PC-9 (cell line): ENCODE measurements at regions of chr20 and their contacts with region 1.

Region 1: DNA sequence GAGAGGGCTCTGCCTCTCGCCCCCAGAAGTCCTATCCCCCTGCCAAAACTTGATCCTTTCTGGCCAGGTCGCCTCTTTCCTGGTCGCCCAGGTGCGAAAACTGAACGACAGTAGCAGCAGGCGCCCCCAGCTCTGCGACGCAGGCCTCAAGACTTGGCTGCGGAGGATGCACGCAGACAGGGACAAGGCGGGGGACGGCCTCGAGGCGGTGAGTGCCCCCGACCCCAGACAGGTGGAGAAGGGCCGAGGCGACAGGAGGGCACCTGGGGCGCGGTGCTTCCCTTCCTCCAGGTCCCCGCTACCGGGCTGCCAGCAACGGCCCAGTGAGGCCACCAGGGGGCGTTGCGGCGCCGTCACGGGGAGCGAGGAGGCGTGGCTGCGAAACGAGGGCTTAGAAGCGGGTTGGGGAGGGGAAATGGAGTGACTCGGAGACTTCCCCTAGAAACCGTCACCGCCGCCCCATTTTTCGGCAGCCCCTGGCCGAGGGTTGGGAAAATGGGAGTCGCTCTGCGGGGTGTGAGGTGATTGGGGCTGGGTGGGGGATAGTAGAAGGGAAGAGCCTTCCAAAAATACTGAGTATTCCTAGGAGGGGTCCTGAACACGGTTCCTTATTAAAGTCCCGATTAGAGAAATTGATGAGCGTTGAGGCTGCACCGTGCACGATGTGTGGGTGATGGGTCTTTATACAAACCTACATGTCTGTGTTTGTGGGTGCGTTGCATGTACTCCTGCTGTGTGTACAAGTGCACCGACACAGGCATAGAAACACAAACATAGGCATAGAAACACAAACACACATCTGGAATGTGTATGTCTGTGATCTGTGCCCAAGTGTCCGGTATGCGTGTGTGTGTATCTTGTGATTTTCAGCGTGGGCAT is 44.6 kb downstream of the ARHGAP40 start:
- DNase-seq: peak in 1 of 2 experiments; percentile 83
- H3K4me3 ChIP-seq: peak overlapping the region; percentile 50; the same call in 1 of the 2 replicates
- H3K27ac ChIP-seq: no peak overlapping the region
- H3K4me1 ChIP-seq: 0 out of 2 replicates have a peak, but pooled peaks cover 5% of the 10 kb centered on the region
- H3K27me3 ChIP-seq: no peaks in the 10 kb centered on the region
- CTCF ChIP-seq: peak; percentile 97

Region 2: DNA sequence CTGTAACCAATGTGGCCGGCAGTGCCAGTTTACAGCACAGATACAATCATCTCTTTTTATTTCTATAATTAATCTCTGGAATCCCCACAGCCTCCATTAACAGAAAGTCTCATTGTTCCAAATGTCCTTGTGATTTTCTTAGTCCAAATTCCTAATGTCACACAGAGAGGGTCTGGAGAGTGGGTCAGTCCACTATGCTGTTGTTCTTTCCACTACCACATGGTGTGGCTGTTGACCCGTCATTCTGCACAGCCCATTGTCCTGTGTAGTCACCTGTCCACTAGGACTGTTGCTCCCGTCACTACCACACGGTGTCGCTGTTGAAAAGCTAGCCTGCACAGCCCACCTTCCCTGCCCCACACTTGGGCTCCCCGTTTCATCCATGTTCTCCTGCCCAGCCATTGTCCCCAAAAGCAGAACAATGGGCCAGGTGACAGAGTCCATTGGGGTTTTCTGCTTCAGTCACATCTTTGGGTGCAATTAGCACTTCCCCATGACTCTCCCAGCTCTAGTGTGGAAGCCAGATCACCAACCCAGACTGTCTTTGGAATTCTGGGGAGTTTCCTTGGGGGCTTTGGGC is 308.6 kb before region 1 on chr20:
- CTCF ChIA-PET with region 1: no interaction called
- POLR2A ChIA-PET with region 1: no interaction called
- intact Hi-C with region 1: loop called (anchors 5 kb)
- DNase-seq: peak; percentile 60 to 61
- H3K4me3 ChIP-seq: no peak overlapping the region
- H3K27ac ChIP-seq: no peak overlapping the region
- H3K4me1 ChIP-seq: no peaks in the 10 kb centered on the region
- H3K27me3 ChIP-seq: peaks cover 48% of the 10 kb centered on the region; the same call in 1 of the 2 replicates
- CTCF ChIP-seq: peak; percentile 94

Region 3: GRCh38 chr20:38559764-38560163 is 86.5 kb before region 1 on chr20:
- CTCF ChIA-PET with region 1: no interaction called
- POLR2A ChIA-PET with region 1: no interaction called
- intact Hi-C with region 1: no loop called
- DNase-seq: no peak
- H3K4me3 ChIP-seq: no peak overlapping the region
- H3K27ac ChIP-seq: no peak overlapping the region
- H3K4me1 ChIP-seq: no peaks in the 10 kb centered on the region
- H3K27me3 ChIP-seq: no peaks in the 10 kb centered on the region
- CTCF ChIP-seq: no peak

Region 4: DNA sequence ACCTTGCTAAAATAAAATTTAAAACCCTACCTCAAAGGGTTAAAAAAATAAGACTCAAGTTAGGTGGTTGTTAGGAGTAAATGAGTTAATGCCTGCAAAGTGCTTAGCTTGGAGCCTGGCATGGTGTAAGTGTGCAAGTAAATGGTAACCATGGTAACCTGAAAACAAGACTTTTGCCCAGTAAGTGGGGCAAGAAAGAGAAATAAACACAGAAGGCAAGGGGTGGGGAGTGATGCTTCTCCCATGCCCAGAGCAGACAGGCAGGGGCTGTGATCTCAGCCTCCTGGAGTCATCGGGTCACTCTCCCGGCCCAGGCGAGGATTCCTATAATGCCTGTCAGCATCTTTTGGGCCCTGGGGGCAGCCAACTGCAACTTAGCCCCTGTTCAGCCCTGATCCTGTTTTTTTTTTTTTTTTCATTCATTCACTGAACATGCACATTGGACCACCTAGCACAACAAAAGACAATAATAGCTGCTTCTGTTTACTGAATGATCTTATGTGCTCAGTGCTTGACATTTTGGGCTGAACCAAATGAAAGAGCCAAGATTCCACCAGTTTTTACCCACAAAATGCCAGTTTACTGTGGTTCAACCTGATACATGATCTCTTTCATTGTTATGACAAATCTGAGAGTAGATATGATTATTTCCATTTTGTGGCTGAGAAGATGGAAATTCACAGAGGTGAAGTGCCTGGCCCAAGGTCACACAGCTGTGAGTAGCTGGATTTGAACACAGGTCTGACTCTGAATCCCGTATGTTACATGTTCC is 19.1 kb after region 1 on chr20:
- CTCF ChIA-PET with region 1: no interaction called
- POLR2A ChIA-PET with region 1: no interaction called
- intact Hi-C with region 1: no loop called
- DNase-seq: no peak
- H3K4me3 ChIP-seq: no peak overlapping the region
- H3K27ac ChIP-seq: no peak overlapping the region
- H3K4me1 ChIP-seq: no peaks in the 10 kb centered on the region
- H3K27me3 ChIP-seq: peaks cover 89% of the 10 kb centered on the region
- CTCF ChIP-seq: no peak

Region 5: DNA sequence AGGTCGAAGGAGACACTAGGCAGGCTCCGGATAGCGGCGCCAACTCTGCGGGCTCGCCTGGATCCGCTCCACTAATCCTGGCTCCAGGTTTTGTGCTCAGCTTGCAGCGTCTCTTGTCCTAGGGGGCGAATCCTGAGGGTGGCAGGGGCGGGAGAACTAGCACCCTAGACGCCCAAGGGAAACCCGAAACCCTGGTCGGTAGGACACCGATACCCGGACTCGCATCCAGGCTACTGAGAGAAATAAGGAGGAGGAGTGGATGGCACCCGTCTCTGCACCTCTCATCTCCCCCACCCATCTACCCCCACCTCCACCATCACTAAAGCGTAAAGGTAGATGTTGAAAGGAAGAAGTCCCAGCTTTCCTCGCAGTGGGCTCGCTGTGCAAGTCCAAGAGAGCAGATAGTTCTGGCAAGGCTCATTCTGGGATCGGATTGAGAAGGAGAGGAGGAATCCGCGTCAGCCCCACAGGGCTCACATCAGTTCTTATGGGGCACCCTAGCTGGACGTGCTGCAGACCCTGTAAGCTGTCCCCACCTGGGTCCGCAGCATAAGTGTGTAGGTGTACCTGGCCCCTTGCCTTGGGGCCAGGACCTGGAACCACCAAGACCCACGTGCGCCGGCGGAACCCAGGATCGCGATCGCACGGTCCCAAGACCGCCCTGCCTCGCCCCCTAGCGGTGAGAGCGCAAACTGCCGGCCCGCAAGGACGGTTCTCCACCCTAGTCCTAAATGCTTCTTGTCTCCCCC is 84.9 kb after region 1 on chr20:
- CTCF ChIA-PET with region 1: interaction called, 4 read pairs
- POLR2A ChIA-PET with region 1: no interaction called
- intact Hi-C with region 1: loop called (anchors 5 kb)
- DNase-seq: peak in 1 of 2 experiments; percentile 38
- H3K4me3 ChIP-seq: no peak overlapping the region
- H3K27ac ChIP-seq: no peak overlapping the region
- H3K4me1 ChIP-seq: no peaks in the 10 kb centered on the region
- H3K27me3 ChIP-seq: peaks cover 82% of the 10 kb centered on the region
- CTCF ChIP-seq: peak; percentile 96

Region 6: GRCh38 chr20:38748097-38748860 is 102.1 kb after region 1 on chr20 and contains the start of gene ACTR5:
- CTCF ChIA-PET with region 1: no interaction called
- POLR2A ChIA-PET with region 1: interaction called, 7 read pairs
- intact Hi-C with region 1: loop called (anchors 1 kb)
- DNase-seq: peak; percentile 73 to 97
- H3K4me3 ChIP-seq: peak within 1 kb of the TSS; percentile 79
- H3K27ac ChIP-seq: peak within 1 kb of the TSS; percentile 40
- H3K4me1 ChIP-seq: peaks cover 13% of the 10 kb centered on the region; the same call in 1 of the 2 replicates
- H3K27me3 ChIP-seq: peaks cover 26% of the 10 kb centered on the region
- CTCF ChIP-seq: no peak
- total RNA-seq, gene ACTR5: 7.8 and 10.1 TPM in 2 replicates

Region 7: GRCh38 chr20:38790200-38791053 is 144.2 kb after region 1 on chr20:
- CTCF ChIA-PET with region 1: no interaction called
- POLR2A ChIA-PET with region 1: interaction called, 3 read pairs
- intact Hi-C with region 1: loop called (anchors 2 kb)
- DNase-seq: peak; percentile 42 to 61
- H3K4me3 ChIP-seq: peak overlapping the region; percentile 24; the same call in 1 of the 2 replicates
- H3K27ac ChIP-seq: peak overlapping the region; percentile 67
- H3K4me1 ChIP-seq: peaks cover 17% of the 10 kb centered on the region
- H3K27me3 ChIP-seq: no peaks in the 10 kb centered on the region
- CTCF ChIP-seq: peak; percentile 85

Region 8: DNA sequence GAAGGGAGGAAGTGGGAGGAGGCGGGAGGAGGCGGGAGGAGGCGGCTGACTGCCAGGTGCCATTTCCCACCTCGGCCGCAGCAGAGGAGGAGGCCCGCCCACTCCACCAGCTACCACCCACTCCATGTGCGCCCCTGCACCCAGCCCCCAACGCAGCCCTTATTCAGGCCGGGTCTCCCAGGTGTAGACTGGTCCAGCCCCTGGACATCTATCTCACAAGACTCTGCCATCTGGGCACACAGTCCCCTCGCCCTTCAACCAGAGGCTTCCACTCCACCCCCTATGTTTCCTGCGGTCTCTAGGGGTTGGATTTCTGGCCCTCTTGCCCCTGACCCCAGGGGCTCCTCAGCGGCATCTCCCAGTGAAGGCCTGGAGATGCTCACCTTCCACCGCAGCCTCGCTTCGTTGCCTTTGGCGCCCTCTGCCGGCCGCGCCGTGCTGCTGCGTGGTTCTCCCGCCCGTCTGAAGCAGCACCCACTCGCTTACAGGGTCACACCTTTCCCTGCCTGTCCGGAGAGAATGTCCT is 247.4 kb after region 1 on chr20:
- CTCF ChIA-PET with region 1: no interaction called
- POLR2A ChIA-PET with region 1: no interaction called
- intact Hi-C with region 1: loop called (anchors 1 kb)
- DNase-seq: peak in 1 of 2 experiments; percentile 74
- H3K4me3 ChIP-seq: no peak overlapping the region
- H3K27ac ChIP-seq: no peak overlapping the region
- H3K4me1 ChIP-seq: 0 out of 2 replicates have a peak, but pooled peaks cover 5% of the 10 kb centered on the region
- H3K27me3 ChIP-seq: peaks cover 35% of the 10 kb centered on the region
- CTCF ChIP-seq: peak; percentile 92

Region 9: DNA sequence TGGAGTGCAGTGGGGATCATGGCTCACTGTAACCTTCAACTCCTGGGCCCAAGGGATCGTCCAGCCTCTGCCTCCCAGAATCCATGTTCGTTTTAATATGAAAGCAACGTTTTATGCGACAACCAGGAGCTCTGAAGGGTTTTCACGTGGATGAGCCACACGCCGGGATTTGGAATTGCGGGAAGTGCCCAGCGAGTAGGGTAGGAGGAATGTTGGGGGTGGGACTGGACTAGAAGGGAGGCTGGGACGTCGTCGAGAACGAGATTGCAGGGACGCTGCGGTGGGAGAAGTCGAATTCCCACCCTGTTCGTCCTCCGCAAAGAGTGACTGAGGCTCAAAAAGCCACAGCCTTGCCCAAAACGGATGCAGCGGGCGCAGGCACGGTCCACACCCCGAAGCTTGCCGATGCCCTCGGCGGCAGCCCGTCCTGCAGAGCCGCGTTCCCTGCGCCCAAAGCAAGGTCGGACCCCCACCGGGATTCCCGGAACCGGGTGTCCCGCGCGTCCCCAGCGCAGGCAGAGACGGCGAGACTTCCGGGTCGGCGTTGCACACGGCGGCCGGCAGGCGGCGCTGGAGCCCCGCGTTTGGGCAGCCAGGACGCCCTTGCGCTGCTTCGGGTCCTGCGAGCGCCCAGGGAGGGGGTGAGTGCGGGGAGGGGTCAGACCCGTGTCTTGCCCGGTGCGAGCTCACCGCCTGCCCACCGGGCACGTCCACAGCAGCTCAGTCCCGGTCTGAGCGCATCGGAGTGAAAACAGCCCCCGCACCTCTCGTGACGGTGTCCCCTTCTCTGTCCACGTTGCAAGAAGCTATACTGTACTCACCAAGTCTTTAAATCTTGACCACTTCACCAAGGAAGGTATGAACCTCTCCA is 403.7 kb after region 1 on chr20:
- CTCF ChIA-PET with region 1: interaction called, 3 read pairs
- POLR2A ChIA-PET with region 1: no interaction called
- intact Hi-C with region 1: loop called (anchors 1 kb)
- DNase-seq: peak in 1 of 2 experiments; percentile 75
- H3K4me3 ChIP-seq: peak overlapping the region; percentile 97
- H3K27ac ChIP-seq: no peak overlapping the region
- H3K4me1 ChIP-seq: 0 out of 2 replicates have a peak, but pooled peaks cover 6% of the 10 kb centered on the region
- H3K27me3 ChIP-seq: peaks cover 20% of the 10 kb centered on the region; the same call in 1 of the 2 replicates
- CTCF ChIP-seq: peak; percentile 96